Activated CD4-positive, alpha-beta memory T cell treated with anti-CD3 and anti-CD28 coated beads for 36 hours (primary cell): ENCODE measurements at regions of chr12 and their contacts with region 1.

Region 1: DNA sequence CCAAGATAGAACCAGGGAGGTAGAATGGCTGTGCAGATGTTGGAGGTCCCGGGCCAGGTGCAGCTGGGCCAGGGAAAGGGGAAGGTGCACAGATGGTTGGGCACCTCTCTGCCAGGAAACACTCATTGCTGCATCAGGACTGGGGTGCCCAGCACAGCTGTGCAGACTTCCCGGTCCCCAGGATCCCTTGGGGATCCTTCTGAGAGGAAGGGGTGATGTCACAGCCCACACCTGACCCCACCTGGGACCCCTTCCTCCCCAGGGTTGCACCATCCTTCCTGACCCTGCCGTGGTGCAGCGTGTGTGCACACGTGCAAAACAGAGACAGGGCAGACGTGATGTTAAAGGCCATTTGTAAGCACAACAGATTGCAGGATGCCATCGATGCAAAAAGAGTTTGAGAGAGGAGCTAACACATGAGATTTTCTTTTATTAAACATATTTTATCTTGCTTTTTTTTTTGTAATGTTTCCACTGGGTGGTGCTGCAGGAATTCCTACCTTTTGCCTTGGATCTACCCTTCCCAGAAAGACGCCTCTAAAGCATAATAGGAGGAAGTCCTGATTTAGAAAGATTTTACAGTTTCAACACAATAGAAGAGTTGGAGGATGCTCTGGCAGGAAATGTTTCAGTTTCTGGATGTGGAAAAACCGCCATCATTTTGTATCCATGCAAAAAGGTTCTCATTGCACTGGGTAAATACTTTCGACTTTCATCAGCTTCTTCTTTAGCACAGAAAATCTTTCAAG is 14.8 kb downstream of the ELK3 start:
- DNase-seq: peak; percentile 15
- H3K4me3 Mint-ChIP-seq: peak overlapping the region; percentile 30
- H3K27ac Mint-ChIP-seq: peak overlapping the region; percentile 93
- H3K4me1 Mint-ChIP-seq: peaks cover 95% of the 10 kb centered on the region
- H3K27me3 Mint-ChIP-seq: no peaks in the 10 kb centered on the region

Region 2: DNA sequence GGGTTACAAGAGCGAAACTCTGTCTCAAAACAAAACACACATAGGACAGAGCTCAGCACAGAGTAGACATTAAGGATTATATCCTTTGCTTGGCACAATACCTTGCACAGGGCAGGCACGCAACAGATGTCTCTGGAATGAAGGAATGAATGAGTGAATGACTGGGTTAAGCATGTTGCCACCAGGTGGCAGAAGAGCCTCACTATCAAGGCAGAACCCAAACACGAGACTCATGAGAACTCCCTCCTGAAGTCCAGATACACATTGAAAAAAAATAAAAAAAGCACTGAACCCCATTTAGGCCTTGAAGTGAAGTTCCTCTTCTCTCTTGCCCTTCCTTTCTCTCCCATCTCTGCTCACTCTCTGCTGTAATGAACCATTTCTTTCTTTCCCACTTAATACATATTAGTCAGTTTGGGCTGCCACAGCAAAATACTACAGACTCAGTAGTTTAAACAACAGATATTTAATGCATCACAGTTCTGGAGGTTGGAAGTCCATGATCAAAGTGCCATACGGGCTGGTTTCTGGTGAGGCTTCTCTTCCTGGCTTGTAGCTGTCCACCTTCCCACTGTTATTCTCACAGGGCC is 147.0 kb before region 1 on chr12:
- CTCF ChIA-PET with region 1: interaction called, 126 read pairs
- POLR2A ChIA-PET with region 1: no interaction called
- intact Hi-C with region 1: no loop called
- DNase-seq: peak; percentile 83
- H3K4me3 Mint-ChIP-seq: no peak overlapping the region
- H3K27ac Mint-ChIP-seq: no peak overlapping the region
- H3K4me1 Mint-ChIP-seq: peaks cover 26% of the 10 kb centered on the region
- H3K27me3 Mint-ChIP-seq: no peaks in the 10 kb centered on the region

Region 3: GRCh38 chr12:96132819-96133218 is 76.2 kb before region 1 on chr12:
- CTCF ChIA-PET with region 1: no interaction called
- POLR2A ChIA-PET with region 1: no interaction called
- intact Hi-C with region 1: loop called (anchors 2 kb)
- DNase-seq: peak; percentile 31
- H3K4me3 Mint-ChIP-seq: no peak overlapping the region
- H3K27ac Mint-ChIP-seq: no peak overlapping the region
- H3K4me1 Mint-ChIP-seq: peaks cover 22% of the 10 kb centered on the region
- H3K27me3 Mint-ChIP-seq: peaks cover 6% of the 10 kb centered on the region

Region 4: GRCh38 chr12:96186607-96187301 is 22.2 kb before region 1 on chr12:
- CTCF ChIA-PET with region 1: interaction called, 10 read pairs
- POLR2A ChIA-PET with region 1: no interaction called
- intact Hi-C with region 1: no loop called
- DNase-seq: no peak
- H3K4me3 Mint-ChIP-seq: no peak overlapping the region
- H3K27ac Mint-ChIP-seq: no peak overlapping the region
- H3K4me1 Mint-ChIP-seq: peaks cover 23% of the 10 kb centered on the region
- H3K27me3 Mint-ChIP-seq: no peaks in the 10 kb centered on the region

Region 5: GRCh38 chr12:96501139-96501761 is 292.3 kb after region 1 on chr12:
- CTCF ChIA-PET with region 1: no interaction called
- POLR2A ChIA-PET with region 1: interaction called, 3 read pairs
- intact Hi-C with region 1: loop called (anchors 5 kb)
- DNase-seq: peak; percentile 56
- H3K4me3 Mint-ChIP-seq: no peak overlapping the region
- H3K27ac Mint-ChIP-seq: peak overlapping the region; percentile 84
- H3K4me1 Mint-ChIP-seq: peaks cover 39% of the 10 kb centered on the region
- H3K27me3 Mint-ChIP-seq: no peaks in the 10 kb centered on the region